Gastrocnemius medialis (tissue), 4 donors: ENCODE measurements at regions of chr9 and their contacts with region 1.

Region 1: GRCh38 chr9:130107234-130107861 is 53.6 kb downstream of the GPR107 start:
- DNase-seq: peak; percentile 40 to 68
- ATAC-seq: peak; percentile 69 to 83
- H3K4me3 ChIP-seq: no peak overlapping the region
- H3K27ac ChIP-seq: no peak overlapping the region
- H3K4me1 ChIP-seq: peaks cover 0 to 10% of the 10 kb centered on the region in 2 donors
- H3K27me3 ChIP-seq: no peaks in the 10 kb centered on the region
- CTCF ChIP-seq: peak; percentile 66 to 83 (median 78)
- POLR2A ChIP-seq: no peak

Region 2: DNA sequence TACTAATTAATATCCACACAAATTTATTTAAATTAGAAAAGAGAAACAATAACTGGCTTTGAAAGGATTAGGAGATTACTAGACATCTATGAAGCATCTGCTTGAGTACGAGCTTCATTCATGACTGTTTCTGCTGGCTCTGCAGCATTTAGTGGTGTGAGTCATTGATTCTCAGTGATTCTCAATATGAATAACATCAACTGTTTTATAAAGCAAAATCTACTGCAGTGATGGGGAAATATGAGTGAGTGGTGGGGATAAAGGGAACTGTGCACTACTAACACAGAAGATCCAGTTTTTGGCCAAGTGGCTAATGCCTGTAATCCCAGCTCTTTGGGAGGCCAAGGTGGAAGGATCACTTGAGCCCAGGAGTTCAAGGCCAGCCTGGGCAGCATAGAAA is 72.8 kb before region 1 on chr9:
- in situ Hi-C with region 1: no loop called
- intact Hi-C with region 1: no loop called
- DNase-seq: no peak
- ATAC-seq: no peak
- H3K4me3 ChIP-seq: no peak overlapping the region
- H3K27ac ChIP-seq: no peak overlapping the region
- H3K4me1 ChIP-seq: peaks cover 15 to 36% of the 10 kb centered on the region in 2 donors
- H3K27me3 ChIP-seq: no peaks in the 10 kb centered on the region
- CTCF ChIP-seq: no peak
- POLR2A ChIP-seq: no peak

Region 3: DNA sequence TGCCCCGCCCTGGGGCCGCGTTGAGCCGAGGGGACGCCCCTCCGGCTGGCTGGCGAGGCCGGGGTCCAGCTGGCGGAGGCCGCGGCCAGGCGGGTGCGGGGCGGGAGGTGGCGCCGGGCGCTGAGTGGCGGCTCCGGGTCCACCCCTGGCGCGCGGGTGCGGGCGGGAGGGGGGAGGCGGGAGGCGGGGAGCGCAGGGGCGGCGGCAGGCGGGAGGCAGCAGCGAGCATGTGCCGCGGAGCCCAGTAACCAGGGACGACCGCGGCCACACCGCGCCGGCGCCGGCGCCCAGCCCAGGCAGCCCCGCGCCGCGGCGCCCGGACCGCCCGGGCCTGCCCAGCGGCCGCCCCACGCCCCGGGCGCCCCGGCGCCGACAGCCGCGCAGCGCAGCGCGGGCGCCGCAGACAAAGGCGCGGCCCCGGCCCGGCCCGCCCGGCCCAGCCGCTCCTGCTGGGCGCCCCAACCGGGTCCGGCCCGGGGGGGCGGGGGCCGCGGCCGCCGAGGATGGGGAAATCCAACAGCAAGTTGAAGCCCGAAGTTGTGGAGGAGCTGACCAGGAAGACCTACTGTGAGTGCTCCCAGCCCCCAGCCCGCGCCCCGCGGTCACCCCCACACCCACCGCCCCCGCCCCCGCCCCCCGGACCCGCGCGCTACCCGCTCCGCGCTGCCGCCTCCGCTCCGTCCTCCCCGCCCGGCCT is 65.0 kb after region 1 on chr9 and contains the start of gene NCS1:
- in situ Hi-C with region 1: no loop called
- intact Hi-C with region 1: loop called (anchors 5 kb)
- DNase-seq: peak; percentile 31 to 39
- ATAC-seq: peak; percentile 68 to 70
- H3K4me3 ChIP-seq: peak within 1 kb of the TSS; percentile 43 to 63 (median 50)
- H3K27ac ChIP-seq: peak within 1 kb of the TSS in 1 of 4 donors; percentile 21
- H3K4me1 ChIP-seq: peaks cover 0 to 12% of the 10 kb centered on the region in 2 donors
- H3K27me3 ChIP-seq: peaks cover 0 to 8% (median 5%) of the 10 kb centered on the region in 3 donors
- CTCF ChIP-seq: no peak
- POLR2A ChIP-seq: no peak
- total RNA-seq, gene NCS1: 2.1 to 4.6 (median 2.5) TPM

Region 4: DNA sequence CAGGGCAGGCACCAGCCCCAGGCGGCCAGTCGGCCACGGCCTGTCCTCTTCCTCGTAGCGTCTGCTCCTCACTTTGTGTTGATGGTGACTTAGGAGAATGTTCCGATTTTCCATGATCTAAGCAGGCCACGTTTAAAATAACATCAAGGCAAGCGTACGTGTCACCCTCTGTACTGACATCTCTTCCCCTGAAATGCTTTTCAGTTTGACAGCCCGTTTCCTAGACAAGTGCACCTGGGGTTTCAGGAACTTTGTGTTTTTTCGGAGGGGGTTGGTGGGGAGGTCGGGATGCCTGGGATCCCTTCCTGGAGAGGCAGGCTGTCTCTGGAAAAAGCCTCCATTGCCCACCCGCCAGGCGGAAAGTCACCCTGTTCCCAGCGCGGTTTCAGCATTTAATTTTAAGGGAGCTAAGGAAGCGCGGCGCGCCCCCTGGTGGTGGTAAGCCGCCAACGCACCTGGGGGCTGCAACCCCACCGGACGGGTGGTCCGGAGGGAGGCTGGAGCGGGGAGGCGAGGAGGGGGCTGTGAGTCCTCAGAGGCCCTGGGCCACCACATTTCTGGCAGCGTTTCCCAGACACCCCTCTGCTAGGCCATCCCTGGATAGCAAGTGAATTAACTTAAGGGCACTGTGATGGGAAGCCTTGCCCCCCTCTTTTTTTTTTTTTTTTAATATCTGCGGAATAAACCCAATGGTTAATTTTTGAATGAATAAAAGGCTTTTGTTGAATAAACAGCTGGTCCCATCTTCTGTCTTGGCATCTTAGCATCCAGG is 128.7 kb after region 1 on chr9:
- in situ Hi-C with region 1: loop called (anchors 5 to 10 kb)
- intact Hi-C with region 1: loop called (anchors 1 kb)
- DNase-seq: peak in 1 of 2 donors; percentile 44
- ATAC-seq: peak; percentile 25 to 48
- H3K4me3 ChIP-seq: peak overlapping the region in 1 of 4 donors; percentile 17
- H3K27ac ChIP-seq: no peak overlapping the region
- H3K4me1 ChIP-seq: no peaks in the 10 kb centered on the region
- H3K27me3 ChIP-seq: no peaks in the 10 kb centered on the region
- CTCF ChIP-seq: peak; percentile 96 to 100 (median 97)
- POLR2A ChIP-seq: no peak